ENCODE measurements at regions of chr12 and their contacts with region 1.

Region 1: GRCh38 chr12:38906482-38907170 is 1.2 kb upstream of the CPNE8 start:
- DNase-seq: peak; percentile 91
- H3K4me3 ChIP-seq: peak overlapping the region; percentile 52 to 69 (median 60)
- H3K27ac ChIP-seq: peak overlapping the region; percentile 83 to 95 (median 90)
- H3K4me1 ChIP-seq: peaks cover 0 to 19% (median 8%) of the 10 kb centered on the region in 4 donors
- H3K27me3 ChIP-seq: no peaks in the 10 kb centered on the region
- CTCF ChIP-seq: peak; percentile 81 to 90 (median 85)
- EP300 ChIP-seq: no peak
- POLR2A ChIP-seq: peak; percentile 45

Region 2: GRCh38 chr12:38316391-38317129 is 590.1 kb before region 1 on chr12 and contains the start of gene ALG10B:
- in situ Hi-C with region 1: loop called in 1 of 4 experiments (anchors 25 kb)
- intact Hi-C with region 1: no loop called
- DNase-seq: peak; percentile 93
- H3K4me3 ChIP-seq: peak within 1 kb of the TSS; percentile 53 to 77 (median 62)
- H3K27ac ChIP-seq: peak within 1 kb of the TSS; percentile 77 to 88 (median 86)
- H3K4me1 ChIP-seq: peaks cover 0 to 18% (median 6%) of the 10 kb centered on the region in 4 donors
- H3K27me3 ChIP-seq: no peaks in the 10 kb centered on the region
- CTCF ChIP-seq: peak; percentile 68 to 80 (median 71)
- EP300 ChIP-seq: no peak
- POLR2A ChIP-seq: no peak
- total RNA-seq, gene ALG10B: 0.37 to 2.6 (median 1.6) TPM

Region 3: DNA sequence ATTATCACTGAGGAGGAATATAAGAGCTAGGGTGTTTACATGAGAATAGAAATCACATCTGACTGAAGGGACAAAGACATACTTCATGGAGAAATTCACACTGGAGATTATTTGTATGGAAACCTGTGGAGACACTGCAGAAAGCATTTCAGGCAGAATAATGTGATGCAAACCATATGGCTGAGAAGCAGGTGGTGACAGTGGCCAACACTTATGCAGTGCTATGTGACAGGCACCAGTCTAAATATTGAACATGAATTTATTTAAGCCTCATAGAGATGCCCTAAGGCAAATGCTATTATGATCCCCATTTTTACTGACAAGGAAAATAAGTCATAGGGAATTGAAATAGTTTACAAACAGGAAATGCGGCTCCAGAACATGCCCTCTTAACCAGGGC is 573.8 kb before region 1 on chr12:
- in situ Hi-C with region 1: loop called in 1 of 4 experiments (anchors 25 kb)
- intact Hi-C with region 1: no loop called
- DNase-seq: no peak
- H3K4me3 ChIP-seq: no peak overlapping the region
- H3K27ac ChIP-seq: no peak overlapping the region
- H3K4me1 ChIP-seq: peaks cover 0 to 3% (median 0%) of the 10 kb centered on the region in 4 donors
- H3K27me3 ChIP-seq: no peaks in the 10 kb centered on the region
- CTCF ChIP-seq: no peak
- EP300 ChIP-seq: no peak
- POLR2A ChIP-seq: no peak

Region 4: DNA sequence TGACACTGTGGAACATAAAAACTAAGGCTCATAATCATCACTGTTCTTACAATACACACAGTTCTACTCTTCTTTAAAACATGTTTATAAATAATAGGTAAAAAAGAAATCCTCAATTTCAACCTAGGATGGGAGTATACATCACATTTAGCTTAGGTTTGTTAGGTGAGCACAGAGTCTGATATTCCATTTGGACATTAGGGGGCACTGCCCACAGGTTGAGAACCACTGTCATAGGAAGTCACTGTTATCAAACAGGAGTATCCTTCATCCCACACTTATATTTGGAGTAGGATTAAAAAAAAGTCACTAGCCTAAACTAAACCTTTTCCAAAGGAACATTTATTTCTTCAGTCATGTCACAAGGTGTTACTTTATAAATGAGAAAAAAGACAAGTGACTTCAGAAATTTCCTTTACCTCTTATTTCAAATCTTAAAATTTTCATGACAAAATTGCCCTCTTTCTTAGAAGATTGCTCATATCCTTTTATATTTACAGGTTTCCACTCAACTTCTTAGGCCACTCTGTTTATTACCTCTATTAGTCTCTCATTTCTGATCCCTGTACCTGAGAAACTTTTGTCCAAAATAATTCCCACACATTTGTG is 241.9 kb before region 1 on chr12:
- in situ Hi-C with region 1: loop called in 2 of 4 experiments (anchors 10 to 25 kb)
- intact Hi-C with region 1: no loop called
- DNase-seq: peak; percentile 14
- H3K4me3 ChIP-seq: no peak overlapping the region
- H3K27ac ChIP-seq: no peak overlapping the region
- H3K4me1 ChIP-seq: no peaks in the 10 kb centered on the region
- H3K27me3 ChIP-seq: no peaks in the 10 kb centered on the region
- CTCF ChIP-seq: peak; percentile 23 to 46 (median 39)
- EP300 ChIP-seq: no peak
- POLR2A ChIP-seq: no peak

Region 5: DNA sequence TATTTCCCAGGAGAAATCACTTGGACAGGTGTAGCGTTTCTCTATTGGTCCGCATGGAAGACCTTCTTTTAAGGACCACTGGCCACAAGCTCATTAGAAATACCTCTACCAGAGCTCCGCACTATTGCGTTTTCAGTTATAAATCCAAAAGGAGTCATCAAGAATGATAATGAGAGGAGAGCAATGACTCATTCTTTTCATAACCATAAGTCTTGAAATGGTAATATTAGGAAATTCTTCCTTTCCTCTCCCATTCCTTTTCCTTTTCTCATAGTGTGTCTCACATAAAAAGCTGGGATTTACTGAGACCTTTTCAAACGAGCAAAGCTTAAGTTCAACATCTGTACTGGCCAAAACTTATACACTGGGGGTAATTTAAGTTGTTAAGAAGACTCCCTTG is 216.9 kb before region 1 on chr12:
- in situ Hi-C with region 1: loop called in 1 of 4 experiments (anchors 25 kb)
- intact Hi-C with region 1: no loop called
- DNase-seq: no peak
- H3K4me3 ChIP-seq: no peak overlapping the region
- H3K27ac ChIP-seq: no peak overlapping the region
- H3K4me1 ChIP-seq: no peaks in the 10 kb centered on the region
- H3K27me3 ChIP-seq: no peaks in the 10 kb centered on the region
- CTCF ChIP-seq: no peak
- EP300 ChIP-seq: no peak
- POLR2A ChIP-seq: no peak